Activated naive CD4-positive, alpha-beta T cell treated with anti-CD3 and anti-CD28 coated beads for 36 hours (primary cell): ENCODE measurements at regions of chr6 and their contacts with region 1.

Region 1: DNA sequence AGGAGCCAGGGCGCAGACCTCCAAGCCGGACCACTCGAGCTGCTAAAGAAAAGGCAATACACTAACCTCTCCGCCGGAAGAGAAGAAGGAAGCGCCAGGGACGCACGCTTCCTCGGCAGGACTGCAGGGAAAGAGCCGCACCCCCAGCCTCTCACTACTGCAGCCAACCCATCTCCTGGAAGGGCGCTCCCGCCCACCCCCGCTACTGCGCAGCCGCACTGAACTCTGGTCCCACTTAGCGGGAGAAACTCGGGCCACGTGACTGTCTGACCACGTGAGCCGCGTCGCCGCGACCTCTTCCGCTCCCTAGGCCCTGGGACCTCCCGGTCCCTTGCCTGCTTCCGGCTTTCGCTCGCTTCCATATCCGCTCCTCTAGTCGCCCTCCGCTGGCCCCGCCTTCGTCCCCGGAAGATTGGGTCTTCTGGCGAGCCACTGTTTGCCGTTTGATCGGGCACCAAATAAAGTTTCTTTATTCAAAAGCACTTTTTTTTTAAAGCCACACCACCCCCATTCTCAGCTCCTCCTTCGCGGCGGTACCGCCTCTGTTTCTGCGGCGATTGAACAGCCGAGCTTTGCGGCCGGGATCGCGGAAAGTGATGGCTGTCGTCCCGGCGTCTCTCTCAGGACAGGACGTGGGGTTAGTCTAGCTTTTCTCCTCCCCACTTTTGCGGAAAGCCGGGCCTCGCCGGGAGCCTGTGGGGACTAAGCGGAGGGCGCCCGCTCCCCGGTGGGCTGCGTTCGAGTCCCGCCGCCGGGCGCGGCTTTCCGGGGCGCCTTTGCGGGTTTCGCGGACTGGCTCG is at the start of gene RMND1:
- DNase-seq: peak; percentile 100
- H3K4me3 Mint-ChIP-seq: peak within 1 kb of the TSS; percentile 97
- H3K27ac Mint-ChIP-seq: peak within 1 kb of the TSS; percentile 86
- H3K4me1 Mint-ChIP-seq: peaks cover 27% of the 10 kb centered on the region
- H3K27me3 Mint-ChIP-seq: no peaks in the 10 kb centered on the region
- total RNA-seq, gene RMND1: 16.7 to 18.4 TPM

Region 2: DNA sequence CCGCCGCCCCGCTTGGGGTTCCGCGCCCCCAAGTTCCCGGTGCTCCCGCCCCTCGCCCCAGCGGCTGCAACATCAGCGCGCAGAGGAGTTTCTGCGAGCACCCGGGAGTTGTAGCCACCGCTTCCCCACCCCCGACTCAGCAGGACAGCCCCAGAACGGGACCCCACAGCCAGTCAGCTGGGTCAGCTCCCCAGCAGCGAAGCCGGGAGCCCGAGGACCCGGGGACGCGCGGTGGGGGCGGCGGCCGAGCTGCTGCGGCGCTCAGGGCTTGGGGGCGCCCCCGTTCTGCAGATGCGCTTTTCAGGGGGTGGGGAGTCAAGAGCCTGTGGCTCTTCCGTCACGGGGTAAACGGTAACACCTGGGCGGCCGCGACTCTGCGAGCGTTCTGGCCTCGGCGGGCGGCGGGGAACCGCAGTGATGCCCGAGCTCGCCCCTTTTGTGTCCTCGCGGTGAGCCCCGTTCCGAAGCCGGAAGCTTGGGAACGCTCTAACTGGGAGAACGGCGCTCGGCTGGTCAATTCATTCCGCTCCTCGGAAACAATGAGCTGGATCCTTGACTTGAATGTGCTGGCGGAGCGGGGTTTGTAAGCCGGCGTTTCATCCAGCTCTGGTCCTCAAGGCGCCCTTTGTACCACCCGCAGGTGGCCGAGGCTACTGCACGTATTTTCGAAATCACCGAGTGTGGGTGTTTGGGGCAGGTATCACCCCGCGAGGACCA is 851.7 kb before region 1 on chr6:
- CTCF ChIA-PET with region 1: no interaction called
- intact Hi-C with region 1: loop called (anchors 1 kb)
- DNase-seq: peak; percentile 87
- H3K4me3 Mint-ChIP-seq: peak overlapping the region; percentile 84
- H3K27ac Mint-ChIP-seq: peak overlapping the region; percentile 90
- H3K4me1 Mint-ChIP-seq: peaks cover 25% of the 10 kb centered on the region
- H3K27me3 Mint-ChIP-seq: peaks cover 46% of the 10 kb centered on the region

Region 3: GRCh38 chr6:151370509-151371078 is 81.6 kb before region 1 on chr6:
- CTCF ChIA-PET with region 1: no interaction called
- intact Hi-C with region 1: loop called (anchors 1 kb)
- DNase-seq: no peak
- H3K4me3 Mint-ChIP-seq: no peak overlapping the region
- H3K27ac Mint-ChIP-seq: no peak overlapping the region
- H3K4me1 Mint-ChIP-seq: peaks cover 33% of the 10 kb centered on the region
- H3K27me3 Mint-ChIP-seq: no peaks in the 10 kb centered on the region

Region 4: DNA sequence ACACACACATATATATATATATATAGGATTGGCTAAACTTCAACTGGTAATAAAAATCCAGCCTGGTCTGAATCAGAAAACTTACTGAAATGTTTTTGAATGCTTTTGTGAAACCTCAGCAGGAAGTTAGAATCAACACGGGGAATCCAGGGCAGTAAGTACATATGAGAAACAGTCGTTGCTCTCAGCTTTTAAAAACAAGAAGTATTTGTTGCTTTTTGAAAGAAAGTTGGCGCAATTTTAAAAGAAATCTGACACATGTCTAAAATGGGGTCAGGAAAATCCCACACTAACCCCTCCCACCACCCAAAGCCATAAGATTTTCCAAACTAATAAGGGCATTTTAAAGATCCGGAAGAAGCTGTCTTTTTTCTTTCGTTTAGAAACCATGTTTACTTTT is 30.1 kb after region 1 on chr6:
- CTCF ChIA-PET with region 1: no interaction called
- intact Hi-C with region 1: loop called (anchors 1 kb)
- DNase-seq: peak; percentile 22
- H3K4me3 Mint-ChIP-seq: peak overlapping the region; percentile 67
- H3K27ac Mint-ChIP-seq: peak overlapping the region; percentile 92
- H3K4me1 Mint-ChIP-seq: peaks cover 20% of the 10 kb centered on the region
- H3K27me3 Mint-ChIP-seq: no peaks in the 10 kb centered on the region

Region 5: GRCh38 chr6:152301764-152302568 is 849.8 kb after region 1 on chr6:
- CTCF ChIA-PET with region 1: no interaction called
- intact Hi-C with region 1: loop called (anchors 1 kb)
- DNase-seq: peak; percentile 93
- H3K4me3 Mint-ChIP-seq: peak overlapping the region; percentile 100
- H3K27ac Mint-ChIP-seq: peak overlapping the region; percentile 96
- H3K4me1 Mint-ChIP-seq: peaks cover 30% of the 10 kb centered on the region
- H3K27me3 Mint-ChIP-seq: no peaks in the 10 kb centered on the region